Naive thymus-derived CD4-positive, alpha-beta T cell (primary cell): ENCODE measurements at regions of chr10 and their contacts with region 1.

Region 1: DNA sequence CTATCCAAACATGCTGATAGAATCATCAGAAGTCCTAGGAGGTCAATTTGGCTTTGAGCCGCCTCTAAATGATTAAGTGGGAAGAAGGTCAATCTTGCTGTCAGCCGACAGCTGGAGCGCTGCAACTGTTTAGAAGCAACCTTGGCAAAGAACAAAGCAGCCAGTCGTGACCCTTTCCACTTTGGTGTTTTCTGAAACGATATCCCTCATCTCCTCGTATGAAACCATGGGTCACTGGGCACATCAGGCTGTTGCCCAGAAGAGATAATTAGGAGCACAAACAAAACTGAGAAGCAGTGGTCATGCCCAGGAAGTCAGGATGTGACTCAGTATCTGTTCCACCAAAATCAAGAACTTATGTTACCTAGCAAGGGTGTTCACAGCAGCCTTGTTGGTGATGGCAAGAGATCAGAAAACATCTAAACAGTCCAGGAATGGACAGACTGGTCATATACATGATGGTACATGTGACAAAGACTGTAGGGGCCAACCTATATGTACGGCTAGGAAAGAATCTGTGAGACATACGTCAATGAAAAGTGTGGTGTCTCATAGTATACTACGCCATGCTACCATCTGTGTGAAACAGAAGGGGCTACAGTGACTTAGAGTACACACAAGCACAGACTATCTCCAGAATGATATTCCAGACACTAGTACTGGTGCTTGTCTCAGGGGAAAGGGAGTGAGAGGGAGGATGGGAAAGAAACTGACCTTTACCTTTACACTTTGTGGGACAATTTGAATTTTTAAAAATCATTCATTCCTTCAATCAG is 22.4 kb downstream of the STN1 start:
- DNase-seq: no peak
- ATAC-seq: no peak
- H3K4me3 ChIP-seq: no peak overlapping the region
- H3K4me3 Mint-ChIP-seq: peak overlapping the region in 1 of 10 donors; percentile 51
- H3K27ac ChIP-seq: no peak overlapping the region
- H3K27ac Mint-ChIP-seq: peak overlapping the region in 7 of 9 donors; percentile 47 to 86 (median 77)
- H3K4me1 ChIP-seq: peaks cover 0 to 14% of the 10 kb centered on the region in 2 donors
- H3K4me1 Mint-ChIP-seq: peaks cover 22 to 51% (median 33%) of the 10 kb centered on the region in 7 donors
- H3K27me3 ChIP-seq: no peaks in the 10 kb centered on the region
- H3K27me3 Mint-ChIP-seq: no peaks in the 10 kb centered on the region

Region 2: GRCh38 chr10:103772096-103772845 is 123.3 kb before region 1 on chr10:
- CTCF ChIA-PET with region 1: no interaction called
- POLR2A ChIA-PET with region 1: no interaction called
- intact Hi-C with region 1: no loop called
- DNase-seq: peak; percentile 29 to 61 (median 56)
- ATAC-seq: peak; percentile 81
- H3K4me3 ChIP-seq: peak overlapping the region; percentile 90
- H3K4me3 Mint-ChIP-seq: peak overlapping the region; percentile 82 to 96 (median 92)
- H3K27ac ChIP-seq: peak overlapping the region; percentile 74
- H3K27ac Mint-ChIP-seq: peak overlapping the region; percentile 74 to 97 (median 93)
- H3K4me1 ChIP-seq: peaks cover 4 to 14% of the 10 kb centered on the region in 2 donors
- H3K4me1 Mint-ChIP-seq: peaks cover 25 to 51% (median 39%) of the 10 kb centered on the region in 7 donors
- H3K27me3 ChIP-seq: no peaks in the 10 kb centered on the region
- H3K27me3 Mint-ChIP-seq: peaks cover 0 to 40% (median 0%) of the 10 kb centered on the region in 5 donors

Region 3: GRCh38 chr10:103911021-103911459 is 15.4 kb after region 1 on chr10:
- CTCF ChIA-PET with region 1: interaction called, 7 read pairs
- POLR2A ChIA-PET with region 1: interaction called, 7 read pairs
- intact Hi-C with region 1: loop called (anchors 1 to 2 kb)
- DNase-seq: peak in 8 of 9 donors; percentile 44 to 89 (median 83)
- ATAC-seq: peak; percentile 84
- H3K4me3 ChIP-seq: peak overlapping the region; percentile 55
- H3K4me3 Mint-ChIP-seq: peak overlapping the region; percentile 74 to 87 (median 84)
- H3K27ac ChIP-seq: peak overlapping the region; percentile 78
- H3K27ac Mint-ChIP-seq: peak overlapping the region; percentile 96 to 99 (median 97)
- H3K4me1 ChIP-seq: peaks cover 80 to 81% of the 10 kb centered on the region in 2 donors
- H3K4me1 Mint-ChIP-seq: peaks cover 47 to 88% (median 76%) of the 10 kb centered on the region in 7 donors
- H3K27me3 ChIP-seq: no peaks in the 10 kb centered on the region
- H3K27me3 Mint-ChIP-seq: no peaks in the 10 kb centered on the region

Region 4: DNA sequence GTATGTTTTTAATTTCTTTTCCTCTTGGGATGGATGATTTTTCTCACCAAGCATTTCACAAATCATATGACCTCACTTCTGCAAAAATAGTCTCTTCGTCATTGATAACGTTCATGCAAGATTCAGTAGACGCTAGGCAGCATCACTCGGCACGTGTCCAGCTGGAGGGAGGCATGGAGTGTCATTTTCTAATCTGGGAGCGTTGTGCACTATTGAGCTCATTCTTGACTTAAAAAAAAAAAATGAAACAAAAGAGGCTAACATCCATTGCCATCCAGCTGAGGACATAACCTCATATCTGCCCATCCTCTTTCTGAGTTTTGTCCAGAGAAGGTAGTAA is 133.9 kb after region 1 on chr10:
- CTCF ChIA-PET with region 1: no interaction called
- POLR2A ChIA-PET with region 1: no interaction called
- intact Hi-C with region 1: no loop called
- DNase-seq: no peak
- ATAC-seq: no peak
- H3K4me3 ChIP-seq: no peak overlapping the region
- H3K4me3 Mint-ChIP-seq: no peak overlapping the region
- H3K27ac ChIP-seq: no peak overlapping the region
- H3K27ac Mint-ChIP-seq: no peak overlapping the region
- H3K4me1 ChIP-seq: no peaks in the 10 kb centered on the region
- H3K4me1 Mint-ChIP-seq: peaks cover 0 to 6% (median 0%) of the 10 kb centered on the region in 7 donors
- H3K27me3 ChIP-seq: no peaks in the 10 kb centered on the region
- H3K27me3 Mint-ChIP-seq: no peaks in the 10 kb centered on the region

Region 5: GRCh38 chr10:104328896-104329710 is 433.5 kb after region 1 on chr10:
- CTCF ChIA-PET with region 1: no interaction called
- POLR2A ChIA-PET with region 1: no interaction called
- intact Hi-C with region 1: no loop called
- DNase-seq: peak in 8 of 9 donors; percentile 71 to 95 (median 80)
- ATAC-seq: peak; percentile 64
- H3K4me3 ChIP-seq: peak overlapping the region; percentile 51
- H3K4me3 Mint-ChIP-seq: peak overlapping the region; percentile 76 to 93 (median 86)
- H3K27ac ChIP-seq: peak overlapping the region; percentile 78
- H3K27ac Mint-ChIP-seq: peak overlapping the region; percentile 87 to 97 (median 94)
- H3K4me1 ChIP-seq: peaks cover 64 to 97% of the 10 kb centered on the region in 2 donors
- H3K4me1 Mint-ChIP-seq: peaks cover 80 to 100% (median 99%) of the 10 kb centered on the region in 7 donors
- H3K27me3 ChIP-seq: no peaks in the 10 kb centered on the region
- H3K27me3 Mint-ChIP-seq: no peaks in the 10 kb centered on the region